Head of caudate nucleus (tissue), 42 donors: ENCODE measurements at regions of chr6 and their contacts with region 1.

Region 1: DNA sequence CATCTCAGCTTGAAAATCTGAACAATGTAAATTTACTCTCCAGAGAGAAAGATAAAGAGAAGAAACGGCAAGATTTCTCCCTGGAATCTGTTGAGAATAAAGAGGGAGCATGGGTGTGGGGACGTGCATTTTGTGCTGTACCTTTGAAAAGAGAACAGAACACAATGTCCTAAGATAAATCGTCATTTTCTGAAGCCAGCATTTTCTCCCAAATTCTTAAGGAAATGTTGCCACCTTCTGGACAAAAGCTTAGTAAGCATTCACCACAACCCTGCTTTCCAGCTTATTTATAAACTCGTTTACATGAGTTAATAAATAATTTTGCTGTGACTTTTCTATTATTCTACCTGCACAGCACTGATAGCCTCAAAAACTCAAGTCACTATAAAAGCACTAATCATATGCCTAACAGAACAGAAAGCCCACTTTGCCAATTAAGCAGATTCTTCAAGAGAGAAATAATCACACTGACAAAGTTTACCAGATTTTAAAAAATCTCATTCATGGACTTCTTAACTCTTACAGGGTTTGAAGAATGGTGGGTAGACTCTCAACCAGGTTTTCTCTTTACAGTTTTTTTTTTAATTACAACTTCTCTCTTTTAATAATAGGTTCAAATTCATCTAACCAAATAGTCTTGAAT is 155.8 kb downstream of the MBOAT1 start:
- DNase-seq: peak in 10 of 42 donors; percentile 7 to 59 (median 23)

Region 2: GRCh38 chr6:18601516-18602020 is 1454.9 kb before region 1 on chr6:
- intact Hi-C with region 1: loop called (anchors 10 kb)
- DNase-seq: no peak

Region 3: GRCh38 chr6:18742406-18742805 is 1314.1 kb before region 1 on chr6:
- intact Hi-C with region 1: loop called (anchors 10 kb)
- DNase-seq: no peak

Region 4: DNA sequence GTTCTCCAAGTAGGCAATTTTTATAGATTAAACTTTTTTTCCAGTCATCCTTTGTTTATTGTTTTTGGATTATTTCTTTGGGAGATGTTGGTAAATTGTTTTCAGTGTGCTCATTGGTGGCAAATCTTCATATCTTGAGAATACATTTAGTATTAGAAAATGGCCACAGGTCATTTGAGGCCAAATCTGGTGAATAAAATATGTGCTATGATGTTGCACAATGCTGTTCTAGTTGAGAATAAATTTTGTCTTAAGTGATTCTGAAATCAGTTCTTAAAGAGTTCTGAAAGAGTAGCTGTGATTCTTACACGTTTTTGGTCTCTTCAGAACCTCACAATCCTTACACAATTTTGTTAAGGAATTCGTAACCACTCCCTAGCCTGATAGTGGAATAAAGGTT is 497.9 kb after region 1 on chr6:
- intact Hi-C with region 1: no loop called
- DNase-seq: no peak